ENCODE measurements at regions of chr12 and their contacts with region 1.

Region 1: DNA sequence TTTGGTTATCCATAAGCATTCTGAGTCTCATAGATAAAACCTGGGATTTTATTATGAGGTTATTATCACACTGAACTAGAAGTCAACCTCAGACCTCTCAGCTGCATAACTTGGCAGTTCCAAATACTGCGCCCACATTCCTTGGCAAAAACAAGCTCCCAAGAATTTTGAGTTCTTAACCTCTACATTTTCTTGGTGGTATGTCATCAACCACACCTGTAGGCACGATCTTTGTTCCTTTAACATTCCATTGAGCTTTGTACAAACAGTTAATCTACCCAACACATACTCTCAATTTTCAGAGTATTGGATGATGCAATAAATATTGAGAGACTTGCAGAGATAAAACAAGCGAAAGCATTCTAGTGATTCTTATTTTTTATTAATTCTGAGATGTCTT is 371.8 kb upstream of the PRICKLE1 start:
- DNase-seq: peak; percentile 63 to 99
- H3K4me3 ChIP-seq: no peak overlapping the region
- H3K27ac ChIP-seq: peak overlapping the region; percentile 91
- H3K4me1 ChIP-seq: peaks cover 38% of the 10 kb centered on the region
- H3K27me3 ChIP-seq: no peaks in the 10 kb centered on the region
- CTCF ChIP-seq: no peak

Region 2: DNA sequence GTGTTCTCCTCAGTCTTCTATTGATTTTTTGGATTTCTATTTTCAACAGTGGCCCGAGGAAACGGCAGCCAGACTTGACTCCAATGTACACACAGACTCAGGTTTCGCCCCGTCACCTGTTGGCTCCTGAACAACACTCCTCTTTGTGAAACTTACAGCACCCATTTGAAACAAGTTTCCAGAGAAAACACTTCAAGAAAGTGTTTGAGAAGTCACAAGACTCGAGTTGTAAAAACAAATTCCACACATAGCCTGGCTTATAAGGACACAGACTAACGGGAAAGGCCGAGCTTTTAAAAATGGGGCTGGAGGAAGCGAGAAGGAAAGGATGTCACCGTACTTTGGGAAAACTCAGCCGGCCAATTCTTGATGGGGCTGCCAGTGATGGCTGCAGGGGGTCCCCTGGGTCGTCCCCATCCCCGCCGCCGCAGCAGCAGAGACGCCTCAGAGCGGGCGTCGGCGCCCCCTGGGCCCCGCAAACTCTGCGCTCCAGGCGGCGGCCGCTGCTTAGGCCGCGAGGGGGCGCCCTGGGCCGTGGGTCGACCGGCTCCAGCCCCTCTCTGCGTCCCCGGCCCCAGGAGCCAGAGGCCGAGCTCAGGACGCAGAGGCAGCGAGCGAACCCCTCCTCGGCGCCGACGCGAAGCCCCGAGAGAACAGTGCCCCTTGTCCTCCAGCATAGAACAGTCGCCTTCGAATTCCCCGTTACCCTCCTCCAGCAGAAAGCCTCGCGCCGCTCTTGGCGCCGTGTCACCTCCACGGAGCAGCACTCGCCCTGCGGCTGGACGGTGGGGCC is 478.8 kb before region 1 on chr12:
- CTCF ChIA-PET with region 1: no interaction called
- POLR2A ChIA-PET with region 1: no interaction called
- intact Hi-C with region 1: loop called (anchors 2 kb)
- DNase-seq: peak in 1 of 2 experiments; percentile 76
- H3K4me3 ChIP-seq: peak overlapping the region; percentile 92
- H3K27ac ChIP-seq: no peak overlapping the region
- H3K4me1 ChIP-seq: peaks cover 8% of the 10 kb centered on the region; the same call in 1 of the 2 replicates
- H3K27me3 ChIP-seq: no peaks in the 10 kb centered on the region
- CTCF ChIP-seq: peak; percentile 85

Region 3: DNA sequence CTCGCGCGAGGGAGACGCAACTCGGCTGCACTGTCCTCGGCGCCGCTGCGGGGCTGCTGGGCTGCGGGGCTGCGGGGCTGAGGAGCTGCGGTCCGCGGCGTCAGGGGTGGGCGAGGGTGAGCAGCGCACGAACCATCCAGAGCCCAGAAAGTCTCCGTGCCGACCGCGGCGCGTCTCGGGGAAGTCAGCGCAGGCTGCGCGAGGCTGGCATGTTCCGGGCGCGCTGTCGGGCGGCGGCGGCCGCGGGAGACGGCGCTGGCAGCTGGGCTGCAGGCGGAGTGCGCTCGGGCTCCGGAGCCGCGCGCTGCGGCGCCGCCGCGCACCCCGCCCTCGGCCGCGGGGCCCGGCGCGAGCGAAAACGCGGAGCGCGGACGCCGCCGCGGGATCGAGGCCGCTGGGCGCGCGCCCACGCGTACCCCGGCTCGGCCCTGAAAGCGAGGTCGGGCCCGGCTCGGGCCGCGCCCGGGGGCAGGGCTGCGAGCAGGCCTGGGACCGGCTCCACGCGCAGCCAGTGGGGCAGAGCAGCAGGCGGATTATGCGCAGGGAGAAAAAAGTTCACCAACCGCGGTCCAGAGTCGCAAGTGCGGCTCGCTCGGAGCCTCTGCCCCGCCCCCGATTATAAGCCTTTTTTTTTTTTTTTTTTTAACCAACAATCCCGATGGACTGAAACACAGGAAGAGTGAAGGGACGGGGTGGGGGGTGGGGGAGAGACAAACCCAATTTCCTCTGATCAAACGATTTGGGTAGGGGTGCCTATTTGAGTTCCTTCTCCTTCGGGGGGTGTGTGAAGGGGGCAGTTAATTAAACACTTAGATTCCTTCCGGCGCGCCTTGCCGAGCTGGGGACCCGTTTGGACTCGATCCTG is 371.7 kb before region 1 on chr12 and contains the start of gene PRICKLE1:
- CTCF ChIA-PET with region 1: no interaction called
- POLR2A ChIA-PET with region 1: no interaction called
- intact Hi-C with region 1: loop called (anchors 2 kb)
- DNase-seq: peak; percentile 36 to 56
- H3K4me3 ChIP-seq: peak within 1 kb of the TSS; percentile 89
- H3K27ac ChIP-seq: no peak within 1 kb of the TSS
- H3K4me1 ChIP-seq: peaks cover 13% of the 10 kb centered on the region; the same call in 1 of the 2 replicates
- H3K27me3 ChIP-seq: no peaks in the 10 kb centered on the region
- CTCF ChIP-seq: no peak
- total RNA-seq, gene PRICKLE1: 6.7 and 7.0 TPM in 2 replicates

Region 4: DNA sequence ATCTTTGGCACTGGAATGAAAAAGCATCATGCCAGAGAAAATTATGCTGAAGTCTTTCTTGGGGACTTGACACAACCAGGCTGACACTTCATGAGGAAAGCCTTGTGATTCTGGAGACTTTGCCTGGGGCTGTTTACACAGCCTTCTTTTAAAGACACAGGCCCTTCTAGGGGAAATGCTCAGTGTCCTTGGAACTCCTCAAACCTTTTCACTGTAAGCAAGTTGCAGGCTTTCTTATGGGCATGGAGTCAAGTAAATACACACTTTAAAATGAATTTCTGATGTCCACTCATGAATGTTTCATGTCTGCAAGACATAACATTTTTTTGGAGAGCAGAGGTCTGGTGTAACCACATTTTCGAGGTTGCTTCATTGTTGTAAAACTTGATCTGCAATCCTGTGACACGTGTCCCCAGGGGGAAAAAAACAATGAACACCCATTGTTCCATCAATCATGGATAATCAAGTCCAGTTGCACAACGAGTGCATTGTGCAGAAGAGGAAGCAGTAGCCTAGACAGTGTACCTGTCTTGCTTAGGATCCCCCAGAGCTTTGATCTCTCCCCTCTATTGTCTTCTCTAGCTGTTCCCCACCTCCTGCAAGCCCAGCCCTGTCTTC is 216.7 kb before region 1 on chr12:
- CTCF ChIA-PET with region 1: no interaction called
- POLR2A ChIA-PET with region 1: no interaction called
- intact Hi-C with region 1: loop called (anchors 5 kb)
- DNase-seq: peak; percentile 49 to 90
- H3K4me3 ChIP-seq: no peak overlapping the region
- H3K27ac ChIP-seq: peak overlapping the region; percentile 35; the same call in 1 of the 2 replicates
- H3K4me1 ChIP-seq: peaks cover 27% of the 10 kb centered on the region
- H3K27me3 ChIP-seq: no peaks in the 10 kb centered on the region
- CTCF ChIP-seq: no peak

Region 5: GRCh38 chr12:42790761-42791151 is 170.6 kb before region 1 on chr12:
- CTCF ChIA-PET with region 1: interaction called, 4 read pairs
- POLR2A ChIA-PET with region 1: no interaction called
- intact Hi-C with region 1: loop called (anchors 2 kb)
- DNase-seq: peak; percentile 48 to 76
- H3K4me3 ChIP-seq: no peak overlapping the region
- H3K27ac ChIP-seq: peak overlapping the region; percentile 13; the same call in 1 of the 2 replicates
- H3K4me1 ChIP-seq: peaks cover 18% of the 10 kb centered on the region
- H3K27me3 ChIP-seq: no peaks in the 10 kb centered on the region
- CTCF ChIP-seq: no peak

Region 6: DNA sequence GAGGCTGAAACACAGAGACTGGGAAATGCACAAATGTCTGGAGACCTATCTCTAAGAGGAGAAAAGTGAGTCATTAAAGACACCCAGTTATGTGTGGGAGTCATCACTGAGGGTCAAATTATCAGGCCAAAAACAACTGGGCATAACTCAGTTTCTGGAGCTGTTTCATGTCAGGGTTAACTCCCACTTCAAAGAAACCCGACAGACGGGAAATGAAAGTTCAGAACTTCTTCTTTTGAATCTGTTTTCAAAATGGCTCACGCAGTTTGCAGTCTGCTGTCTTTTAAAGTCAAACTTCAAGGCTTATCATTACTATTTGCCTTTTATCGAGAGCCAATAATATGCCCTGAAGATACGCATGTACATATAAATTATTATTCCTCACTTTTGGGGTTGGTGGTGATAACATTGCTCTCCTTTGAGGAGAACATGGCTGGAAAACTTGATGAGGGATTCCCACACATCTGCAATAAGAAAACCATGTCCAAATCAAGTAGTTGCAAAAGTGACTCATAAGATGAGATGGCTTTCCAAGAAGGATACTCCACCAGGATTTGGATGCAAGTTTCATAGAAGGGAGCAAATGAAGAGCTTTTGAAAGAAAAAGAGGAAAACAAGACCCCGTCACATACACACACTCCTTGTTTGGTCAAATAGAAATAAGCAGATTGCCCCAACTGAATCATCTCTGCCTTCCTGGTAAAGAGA is 249.2 kb after region 1 on chr12:
- CTCF ChIA-PET with region 1: no interaction called
- POLR2A ChIA-PET with region 1: no interaction called
- intact Hi-C with region 1: no loop called
- DNase-seq: no peak
- H3K4me3 ChIP-seq: no peak overlapping the region
- H3K27ac ChIP-seq: no peak overlapping the region
- H3K4me1 ChIP-seq: no peaks in the 10 kb centered on the region; the same call in 1 of the 2 replicates
- H3K27me3 ChIP-seq: no peaks in the 10 kb centered on the region
- CTCF ChIP-seq: no peak

Measured in PC-9 (cell line).